Ascending aorta (tissue), 2 donors: ENCODE measurements at regions of chr17 and their contacts with region 1.

Region 1: GRCh38 chr17:5584383-5585286 is at the start of gene NLRP1:
- DNase-seq: peak; percentile 88 to 96
- H3K4me3 ChIP-seq: peak within 1 kb of the TSS; percentile 56 to 80
- H3K27ac ChIP-seq: peak within 1 kb of the TSS; percentile 90
- H3K4me1 ChIP-seq: peaks cover 15 to 23% of the 10 kb centered on the region in 2 donors
- H3K27me3 ChIP-seq: no peaks in the 10 kb centered on the region
- CTCF ChIP-seq: no peak
- total RNA-seq, gene NLRP1: 67.7 TPM

Region 2: GRCh38 chr17:5706577-5707216 is 122.1 kb after region 1 on chr17:
- intact Hi-C with region 1: loop called (anchors 5 kb)
- DNase-seq: no peak
- H3K4me3 ChIP-seq: no peak overlapping the region
- H3K27ac ChIP-seq: no peak overlapping the region
- H3K4me1 ChIP-seq: no peaks in the 10 kb centered on the region
- H3K27me3 ChIP-seq: no peaks in the 10 kb centered on the region
- CTCF ChIP-seq: peak in 1 of 3 experiments; percentile 42

Region 3: GRCh38 chr17:6061290-6061689 is 476.7 kb after region 1 on chr17:
- intact Hi-C with region 1: loop called (anchors 2 kb)
- DNase-seq: peak; percentile 37 to 81
- H3K4me3 ChIP-seq: no peak overlapping the region
- H3K27ac ChIP-seq: no peak overlapping the region
- H3K4me1 ChIP-seq: no peaks in the 10 kb centered on the region
- H3K27me3 ChIP-seq: no peaks in the 10 kb centered on the region
- CTCF ChIP-seq: no peak

Region 4: GRCh38 chr17:6421700-6422604 is 837.3 kb after region 1 on chr17:
- intact Hi-C with region 1: loop called (anchors 1 kb)
- DNase-seq: peak; percentile 31 to 82
- H3K4me3 ChIP-seq: no peak overlapping the region
- H3K27ac ChIP-seq: no peak overlapping the region
- H3K4me1 ChIP-seq: no peaks in the 10 kb centered on the region
- H3K27me3 ChIP-seq: no peaks in the 10 kb centered on the region
- CTCF ChIP-seq: peak; percentile 75 to 91 (median 78)

Region 5: GRCh38 chr17:6435968-6436367 is 851.3 kb after region 1 on chr17:
- intact Hi-C with region 1: loop called (anchors 5 kb)
- DNase-seq: no peak
- H3K4me3 ChIP-seq: no peak overlapping the region
- H3K27ac ChIP-seq: no peak overlapping the region
- H3K4me1 ChIP-seq: no peaks in the 10 kb centered on the region
- H3K27me3 ChIP-seq: no peaks in the 10 kb centered on the region
- CTCF ChIP-seq: peak; percentile 48 to 81 (median 76)

Region 6: GRCh38 chr17:6640536-6641373 is 1056.1 kb after region 1 on chr17 and contains the starts of genes KIAA0753 and TXNDC17:
- intact Hi-C with region 1: loop called (anchors 2 kb)
- DNase-seq: peak; percentile 55 to 96
- H3K4me3 ChIP-seq: peak within 1 kb of the TSS; percentile 64 to 93
- H3K27ac ChIP-seq: peak within 1 kb of the TSS; percentile 74 to 84
- H3K4me1 ChIP-seq: peaks cover 7 to 17% of the 10 kb centered on the region in 2 donors
- H3K27me3 ChIP-seq: no peaks in the 10 kb centered on the region
- CTCF ChIP-seq: no peak
- total RNA-seq, gene KIAA0753: 2.9 TPM
- total RNA-seq, gene TXNDC17: 0.96 TPM